Natural killer cell (primary cell): ENCODE measurements at regions of chr12 and their contacts with region 1.

Region 1: GRCh38 chr12:7638760-7639555 is 26.8 kb downstream of the APOBEC1 start:
- DNase-seq: peak; percentile 45 to 93
- ATAC-seq: peak; percentile 88 to 90 (median 88)
- H3K4me3 ChIP-seq: no peak overlapping the region
- H3K4me3 Mint-ChIP-seq: peak overlapping the region; percentile 86
- H3K27ac ChIP-seq: peak overlapping the region; percentile 46
- H3K27ac Mint-ChIP-seq: peak overlapping the region; percentile 73 to 77
- H3K4me1 ChIP-seq: peaks cover 21% of the 10 kb centered on the region
- H3K4me1 Mint-ChIP-seq: peaks cover 21 to 24% of the 10 kb centered on the region in 2 donors
- H3K27me3 ChIP-seq: no peaks in the 10 kb centered on the region
- H3K27me3 Mint-ChIP-seq: peaks cover 8 to 9% of the 10 kb centered on the region in 2 donors
- CTCF ChIP-seq: peak; percentile 90

Region 2: GRCh38 chr12:6347367-6348337 is 1291.3 kb before region 1 on chr12:
- intact Hi-C with region 1: no loop called
- DNase-seq: peak in 1 of 2 donors; percentile 42
- ATAC-seq: no peak
- H3K4me3 ChIP-seq: no peak overlapping the region
- H3K4me3 Mint-ChIP-seq: no peak overlapping the region
- H3K27ac ChIP-seq: no peak overlapping the region
- H3K27ac Mint-ChIP-seq: peak overlapping the region in 1 of 2 donors; percentile 88
- H3K4me1 ChIP-seq: peaks cover 38% of the 10 kb centered on the region
- H3K4me1 Mint-ChIP-seq: peaks cover 27 to 44% of the 10 kb centered on the region in 2 donors
- H3K27me3 ChIP-seq: no peaks in the 10 kb centered on the region
- H3K27me3 Mint-ChIP-seq: no peaks in the 10 kb centered on the region
- CTCF ChIP-seq: no peak

Region 3: DNA sequence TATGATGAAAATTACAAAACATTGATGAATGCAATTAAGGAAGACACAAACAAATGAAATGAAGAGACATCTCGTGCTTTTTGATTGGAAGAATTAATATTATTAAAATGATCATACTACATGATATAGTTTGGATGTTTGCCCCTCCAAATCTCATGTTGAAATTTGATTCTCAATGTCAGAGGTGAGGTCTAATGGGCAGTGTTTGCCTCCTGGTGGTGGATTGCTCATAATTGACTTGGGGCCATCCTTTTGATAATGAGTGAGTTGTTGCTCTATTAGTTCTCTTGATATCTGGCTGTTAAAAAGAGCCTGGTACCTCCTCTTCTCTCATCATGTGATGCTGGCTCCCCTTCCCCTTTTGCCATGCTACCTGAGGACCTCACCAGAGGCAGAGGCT is 251.7 kb before region 1 on chr12:
- intact Hi-C with region 1: loop called (anchors 5 kb)
- DNase-seq: peak in 1 of 2 donors; percentile 16
- ATAC-seq: no peak
- H3K4me3 ChIP-seq: no peak overlapping the region
- H3K4me3 Mint-ChIP-seq: no peak overlapping the region
- H3K27ac ChIP-seq: no peak overlapping the region
- H3K27ac Mint-ChIP-seq: no peak overlapping the region
- H3K4me1 ChIP-seq: no peaks in the 10 kb centered on the region
- H3K4me1 Mint-ChIP-seq: no peaks in the 10 kb centered on the region
- H3K27me3 ChIP-seq: peaks cover 2% of the 10 kb centered on the region
- H3K27me3 Mint-ChIP-seq: peaks cover 13 to 39% of the 10 kb centered on the region in 2 donors
- CTCF ChIP-seq: peak; percentile 10

Region 4: DNA sequence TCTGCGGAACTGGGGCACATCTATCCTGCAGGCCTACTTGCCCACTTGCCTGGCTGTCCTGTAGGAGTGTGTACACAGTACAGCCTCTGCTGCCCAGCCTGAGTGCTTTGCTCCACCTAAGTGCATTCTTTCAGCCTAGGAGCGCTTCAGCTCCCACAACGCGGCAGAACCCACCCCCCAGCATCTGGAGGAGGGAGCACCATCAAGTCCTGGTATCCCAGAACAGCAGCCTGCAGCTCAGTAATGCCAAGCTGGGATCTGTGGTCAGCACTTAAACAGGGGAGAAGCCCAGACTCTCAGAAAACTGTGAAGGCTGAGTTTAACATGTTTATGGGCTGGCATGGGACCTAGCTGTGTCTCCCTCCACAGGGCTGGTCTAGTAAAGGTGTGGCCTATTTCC is 55.4 kb before region 1 on chr12:
- intact Hi-C with region 1: loop called (anchors 1 kb)
- DNase-seq: no peak
- ATAC-seq: no peak
- H3K4me3 ChIP-seq: no peak overlapping the region
- H3K4me3 Mint-ChIP-seq: no peak overlapping the region
- H3K27ac ChIP-seq: no peak overlapping the region
- H3K27ac Mint-ChIP-seq: no peak overlapping the region
- H3K4me1 ChIP-seq: no peaks in the 10 kb centered on the region
- H3K4me1 Mint-ChIP-seq: peaks cover under 1 to 1% of the 10 kb centered on the region in 2 donors
- H3K27me3 ChIP-seq: peaks cover 4% of the 10 kb centered on the region
- H3K27me3 Mint-ChIP-seq: peaks cover 30 to 65% of the 10 kb centered on the region in 2 donors
- CTCF ChIP-seq: no peak